ENCODE measurements at regions of chr18 and their contacts with region 1.

Region 1: GRCh38 chr18:48106976-48107711 is 176.7 kb upstream of the SMAD2 start:
- H3K4me3 ChIP-seq: no peak overlapping the region
- H3K27ac ChIP-seq: 0 out of 2 replicates have a peak overlapping the region, but pooled peaks have one; percentile 37
- H3K4me1 ChIP-seq: peaks cover 19% of the 10 kb centered on the region
- CTCF ChIP-seq: no peak

Region 2: DNA sequence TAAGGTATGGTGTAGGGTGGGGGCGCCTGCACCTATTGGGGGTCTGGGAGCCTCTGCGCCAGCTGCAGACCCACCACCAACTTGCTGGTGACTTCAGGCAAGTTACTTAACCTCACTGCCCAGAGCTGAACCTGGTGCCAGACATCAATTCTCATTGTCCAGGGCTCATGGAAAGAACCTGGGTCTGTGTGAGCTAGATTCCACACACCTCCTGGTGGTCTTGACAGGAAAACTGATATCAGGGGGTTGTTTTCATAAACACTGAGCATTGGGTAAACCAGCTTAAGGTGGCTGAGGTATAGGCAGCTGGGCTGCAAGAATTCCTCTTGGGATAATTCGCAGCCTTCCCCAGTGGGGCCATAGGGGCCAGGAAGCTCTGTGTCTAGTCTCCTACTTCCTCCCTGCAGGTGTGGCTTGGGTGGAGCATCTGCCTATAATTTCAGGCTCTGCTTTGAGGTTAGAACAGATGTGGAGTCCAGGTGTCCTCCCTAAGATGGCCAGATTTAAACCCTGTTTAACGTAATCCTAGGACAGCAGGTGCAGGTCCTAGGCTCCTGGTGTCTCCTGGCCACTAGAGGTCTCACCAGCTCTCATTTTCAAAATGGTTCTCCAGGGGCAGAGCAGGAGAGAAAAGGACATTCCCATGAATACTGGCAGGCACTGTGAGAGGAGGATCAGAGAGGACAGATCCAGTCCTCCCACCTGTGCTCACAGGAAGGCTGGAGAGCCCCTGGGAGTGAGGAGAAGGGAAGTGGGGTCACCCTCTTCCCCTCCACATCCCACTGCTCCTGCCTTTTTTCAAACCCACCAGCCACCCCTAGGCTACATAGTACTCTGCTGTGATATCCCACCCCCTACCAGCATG is 76.3 kb before region 1 on chr18:
- CTCF ChIA-PET with region 1: interaction called, 10 read pairs
- POLR2A ChIA-PET with region 1: no interaction called
- H3K4me3 ChIP-seq: no peak overlapping the region
- H3K27ac ChIP-seq: no peak overlapping the region
- H3K4me1 ChIP-seq: peaks cover 3% of the 10 kb centered on the region; the same call in 1 of the 2 replicates
- CTCF ChIP-seq: peak; percentile 83